ENCODE measurements at regions of chr6 and their contacts with region 1.

Region 1: GRCh38 chr6:24991810-24992467 is 56.2 kb upstream of the RIPOR2 start:
- DNase-seq: peak in 1 of 2 donors; percentile 68
- ATAC-seq: peak; percentile 77 to 95 (median 88)
- H3K4me3 ChIP-seq: no peak overlapping the region
- H3K27ac ChIP-seq: no peak overlapping the region
- H3K4me1 ChIP-seq: no peaks in the 10 kb centered on the region
- H3K27me3 ChIP-seq: no peaks in the 10 kb centered on the region
- CTCF ChIP-seq: peak; percentile 87

Region 2: DNA sequence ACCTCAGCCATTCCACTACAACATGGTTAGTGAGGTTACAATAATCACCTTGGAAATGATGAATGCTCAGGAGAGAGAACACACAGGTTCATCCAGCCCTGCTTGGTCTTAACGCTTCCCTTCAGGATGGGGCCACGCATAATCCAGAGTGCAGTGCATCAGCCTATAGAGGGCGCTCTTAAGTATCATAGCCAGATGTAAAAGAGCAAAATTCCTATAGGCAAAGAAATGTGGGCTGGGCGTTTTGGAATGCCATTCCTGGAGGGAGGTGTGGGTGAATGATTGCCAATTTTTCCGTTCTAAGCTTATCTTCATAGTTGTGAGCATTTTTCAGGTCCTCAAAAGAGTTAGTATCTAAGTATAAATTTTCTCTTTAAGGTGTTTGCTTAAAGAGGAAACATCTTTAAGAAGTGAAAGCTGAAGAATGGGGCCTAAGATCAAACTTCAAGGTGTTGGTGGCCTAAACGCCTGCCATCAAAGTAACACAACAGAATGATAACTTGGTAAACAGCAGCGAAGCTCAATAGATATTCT is 58.0 kb before region 1 on chr6:
- intact Hi-C with region 1: loop called in 1 of 2 experiments (anchors 2 kb)
- DNase-seq: no peak
- ATAC-seq: no peak
- H3K4me3 ChIP-seq: no peak overlapping the region
- H3K27ac ChIP-seq: no peak overlapping the region
- H3K4me1 ChIP-seq: peaks cover 29% of the 10 kb centered on the region
- H3K27me3 ChIP-seq: no peaks in the 10 kb centered on the region
- CTCF ChIP-seq: peak; percentile 25